OCI-LY7 (cell line): ENCODE measurements at regions of chr7 and their contacts with region 1.

Region 1: GRCh38 chr7:74617180-74617744 is 40.3 kb upstream of the GTF2I start:
- DNase-seq: peak; percentile 70
- H3K4me3 ChIP-seq: peak overlapping the region; percentile 16
- H3K27ac ChIP-seq: peak overlapping the region; percentile 68
- H3K4me1 ChIP-seq: peaks cover 33% of the 10 kb centered on the region
- CTCF ChIP-seq: no peak

Region 2: DNA sequence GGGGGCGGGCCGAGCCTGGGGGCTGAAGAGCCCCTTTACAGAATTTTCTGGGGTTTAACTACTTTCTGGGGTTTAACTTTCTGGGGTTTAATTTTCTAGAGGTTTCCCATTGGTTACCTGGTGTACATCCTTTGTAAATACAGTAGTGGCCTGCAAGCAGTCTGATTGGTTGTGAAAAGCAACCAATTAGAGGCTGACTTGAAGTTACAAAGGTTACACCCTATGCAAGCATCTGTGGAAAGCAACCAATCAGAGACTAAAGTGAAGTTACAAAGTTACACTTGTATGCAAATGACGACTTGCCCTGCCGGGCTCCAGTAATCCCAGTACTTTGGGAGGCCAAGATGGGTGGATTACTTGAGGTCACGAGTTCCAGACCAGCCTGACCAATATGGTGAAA is 67.7 kb after region 1 on chr7:
- CTCF ChIA-PET with region 1: no interaction called
- POLR2A ChIA-PET with region 1: no interaction called
- intact Hi-C with region 1: no loop called
- DNase-seq: no peak
- H3K4me3 ChIP-seq: no peak overlapping the region
- H3K27ac ChIP-seq: no peak overlapping the region
- H3K4me1 ChIP-seq: no peaks in the 10 kb centered on the region
- CTCF ChIP-seq: no peak

Region 3: DNA sequence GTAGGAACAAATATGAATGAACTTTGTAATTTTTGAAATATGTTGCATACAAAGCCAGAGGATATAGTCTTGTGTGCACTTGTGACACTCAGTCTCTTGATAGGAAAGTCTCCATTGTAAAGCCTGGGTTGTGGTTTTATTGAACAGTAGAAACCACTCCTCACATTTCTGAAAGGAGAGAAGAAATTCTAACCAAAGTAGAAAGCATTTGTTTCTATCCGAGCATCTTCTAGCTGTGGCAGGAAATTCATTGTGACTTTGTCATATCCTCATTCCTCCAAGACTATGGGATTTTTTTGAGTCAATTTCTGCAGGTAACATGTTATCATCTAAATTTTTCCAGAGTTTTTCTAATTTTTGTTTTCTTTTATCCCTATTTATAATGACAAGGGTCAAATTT is 101.1 kb after region 1 on chr7:
- CTCF ChIA-PET with region 1: interaction called, 14 read pairs
- POLR2A ChIA-PET with region 1: no interaction called
- intact Hi-C with region 1: loop called (anchors 10 kb)
- DNase-seq: no peak
- H3K4me3 ChIP-seq: no peak overlapping the region
- H3K27ac ChIP-seq: no peak overlapping the region
- H3K4me1 ChIP-seq: no peaks in the 10 kb centered on the region
- CTCF ChIP-seq: no peak